Prostate gland (tissue), 2 donors: ENCODE measurements at regions of chr2 and their contacts with region 1.

Region 1: GRCh38 chr2:149597668-149598326 is 10.2 kb upstream of the MMADHC start:
- DNase-seq: peak; percentile 51
- H3K4me3 ChIP-seq: peak overlapping the region in 1 of 2 donors; percentile 5
- H3K27ac ChIP-seq: no peak overlapping the region
- H3K4me1 ChIP-seq: no peaks in the 10 kb centered on the region
- H3K27me3 ChIP-seq: no peaks in the 10 kb centered on the region
- CTCF ChIP-seq: peak; percentile 60 to 88 (median 75)
- POLR2A ChIP-seq: no peak

Region 2: DNA sequence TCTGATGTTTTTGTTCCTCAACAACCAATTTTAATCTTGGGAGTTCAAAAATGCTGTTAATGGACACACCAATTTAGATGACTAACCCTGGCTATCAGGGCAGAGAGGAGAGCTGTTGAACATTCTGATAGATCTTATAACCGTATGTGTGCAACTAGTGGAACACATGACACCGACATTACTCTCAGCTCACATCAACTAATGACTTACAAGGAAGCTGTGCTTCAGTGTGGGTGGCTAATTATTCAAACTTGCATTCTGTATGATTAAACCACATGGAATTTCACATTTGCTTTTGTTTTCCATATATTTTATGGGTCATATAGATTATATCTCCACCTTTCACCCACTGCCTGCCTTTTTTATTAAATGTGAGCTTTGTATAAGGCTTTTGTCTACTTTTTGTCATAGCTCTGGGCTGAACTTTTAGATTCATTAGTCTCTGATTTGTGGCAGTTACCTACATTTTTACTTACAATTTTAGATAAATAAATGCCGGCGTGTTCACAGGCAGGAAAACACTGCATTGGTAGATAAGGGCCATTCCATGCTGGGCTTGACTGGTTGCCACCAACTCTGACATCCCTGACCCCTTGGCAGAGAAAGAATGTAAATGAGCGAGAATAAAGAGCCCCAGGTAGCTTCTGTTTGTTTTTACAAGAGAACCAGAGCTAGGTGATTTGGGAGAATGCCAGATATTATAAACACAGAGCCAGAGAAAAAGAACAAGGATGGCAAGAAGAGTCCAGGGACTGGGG is 231.8 kb before region 1 on chr2:
- intact Hi-C with region 1: no loop called
- DNase-seq: peak; percentile 12
- H3K4me3 ChIP-seq: no peak overlapping the region
- H3K27ac ChIP-seq: no peak overlapping the region
- H3K4me1 ChIP-seq: no peaks in the 10 kb centered on the region
- H3K27me3 ChIP-seq: no peaks in the 10 kb centered on the region
- CTCF ChIP-seq: no peak
- POLR2A ChIP-seq: no peak

Region 3: DNA sequence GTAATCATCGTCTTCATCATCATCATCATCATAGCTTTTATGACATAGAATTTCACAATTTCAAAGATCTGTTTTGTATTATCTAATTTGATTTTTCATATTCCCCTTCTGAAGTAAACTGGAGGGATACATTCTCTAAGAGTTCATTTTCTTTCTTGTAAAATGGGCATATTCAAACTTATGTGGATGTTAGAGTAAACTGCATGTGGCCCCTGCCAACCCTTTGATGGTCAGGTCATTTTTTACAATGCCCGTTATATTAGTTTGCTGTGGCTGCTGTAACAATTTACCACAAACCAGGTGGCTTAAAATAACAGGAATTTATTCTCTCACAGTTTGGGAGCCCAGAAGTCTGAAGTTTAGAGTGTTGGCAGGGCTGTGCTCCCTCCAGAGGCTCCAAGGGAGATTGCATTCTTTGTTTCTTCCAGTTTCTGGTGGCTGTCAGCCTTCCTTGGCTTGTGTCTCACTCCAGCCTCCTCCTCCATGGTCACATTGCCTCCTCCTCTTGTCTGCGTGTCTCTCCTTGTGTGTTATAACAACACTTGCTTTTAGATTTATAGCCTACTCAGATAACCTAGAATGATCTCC is 117.3 kb after region 1 on chr2:
- intact Hi-C with region 1: loop called (anchors 10 kb)
- DNase-seq: no peak
- H3K4me3 ChIP-seq: no peak overlapping the region
- H3K27ac ChIP-seq: no peak overlapping the region
- H3K4me1 ChIP-seq: no peaks in the 10 kb centered on the region
- H3K27me3 ChIP-seq: no peaks in the 10 kb centered on the region
- CTCF ChIP-seq: peak in 2 of 4 experiments; percentile 16 to 22
- POLR2A ChIP-seq: no peak

Region 4: GRCh38 chr2:150610671-150611279 is 1013.0 kb after region 1 on chr2:
- intact Hi-C with region 1: loop called (anchors 10 kb)
- DNase-seq: no peak
- H3K4me3 ChIP-seq: no peak overlapping the region
- H3K27ac ChIP-seq: no peak overlapping the region
- H3K4me1 ChIP-seq: no peaks in the 10 kb centered on the region
- H3K27me3 ChIP-seq: no peaks in the 10 kb centered on the region
- CTCF ChIP-seq: peak; percentile 10 to 55 (median 46)
- POLR2A ChIP-seq: no peak

Region 5: DNA sequence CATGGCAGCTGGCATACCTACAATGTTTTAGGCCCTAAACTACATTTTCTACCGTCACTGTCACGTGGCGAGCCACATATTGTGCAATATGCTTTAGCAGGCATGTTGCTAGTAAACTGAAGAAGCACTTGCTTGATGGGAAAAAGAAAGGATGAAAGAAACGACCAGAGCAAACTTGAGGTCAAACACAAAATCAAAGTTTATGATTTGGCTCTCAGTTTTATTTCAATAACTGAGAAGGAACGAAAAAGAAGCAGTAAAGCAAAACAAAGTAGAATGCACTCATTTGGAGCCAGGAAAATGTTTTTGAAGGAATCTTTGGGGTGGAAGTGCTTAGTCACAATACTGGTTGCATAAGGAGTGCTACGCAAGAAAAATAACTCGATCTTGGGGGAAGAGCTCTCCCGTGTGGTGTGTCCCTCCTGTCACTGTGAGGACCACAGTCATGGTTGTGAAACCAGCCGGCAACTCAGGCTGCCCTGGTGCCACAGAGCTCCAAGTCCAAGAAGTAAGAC is 1314.0 kb after region 1 on chr2:
- intact Hi-C with region 1: loop called (anchors 10 kb)
- DNase-seq: peak; percentile 11
- H3K4me3 ChIP-seq: no peak overlapping the region
- H3K27ac ChIP-seq: peak overlapping the region in 1 of 2 donors; percentile 25
- H3K4me1 ChIP-seq: no peaks in the 10 kb centered on the region
- H3K27me3 ChIP-seq: no peaks in the 10 kb centered on the region
- CTCF ChIP-seq: no peak
- POLR2A ChIP-seq: no peak

Region 6: GRCh38 chr2:151238527-151239487 is 1641.0 kb after region 1 on chr2:
- intact Hi-C with region 1: loop called (anchors 5 kb)
- DNase-seq: peak; percentile 34
- H3K4me3 ChIP-seq: no peak overlapping the region
- H3K27ac ChIP-seq: no peak overlapping the region
- H3K4me1 ChIP-seq: no peaks in the 10 kb centered on the region
- H3K27me3 ChIP-seq: no peaks in the 10 kb centered on the region
- CTCF ChIP-seq: peak; percentile 52 to 83 (median 68)
- POLR2A ChIP-seq: no peak